ENCODE measurements at regions of chr4 and their contacts with region 1.

Region 1: GRCh38 chr4:986879-987623 is at the start of gene IDUA:
- DNase-seq: peak; percentile 83 to 91 (median 85)
- H3K4me3 ChIP-seq: peak within 1 kb of the TSS; percentile 74
- H3K4me3 Mint-ChIP-seq: peak within 1 kb of the TSS; percentile 86 to 95 (median 89)
- H3K27ac ChIP-seq: peak within 1 kb of the TSS; percentile 60
- H3K27ac Mint-ChIP-seq: peak within 1 kb of the TSS; percentile 64 to 96 (median 89)
- H3K4me1 ChIP-seq: peaks cover 23% of the 10 kb centered on the region
- H3K4me1 Mint-ChIP-seq: peaks cover 15 to 33% (median 16%) of the 10 kb centered on the region in 3 donors
- H3K27me3 ChIP-seq: no peaks in the 10 kb centered on the region
- H3K27me3 Mint-ChIP-seq: no peaks in the 10 kb centered on the region
- total RNA-seq, gene IDUA: 18.7 to 19.1 TPM

Region 2: GRCh38 chr4:742742-743311 is 244.2 kb before region 1 on chr4:
- CTCF ChIA-PET with region 1: interaction called, 60 read pairs
- POLR2A ChIA-PET with region 1: interaction called, 9 read pairs
- DNase-seq: peak; percentile 63 to 83 (median 66)
- H3K4me3 ChIP-seq: no peak overlapping the region
- H3K4me3 Mint-ChIP-seq: no peak overlapping the region
- H3K27ac ChIP-seq: no peak overlapping the region
- H3K27ac Mint-ChIP-seq: peak overlapping the region in 2 of 8 donors; percentile 9 to 17
- H3K4me1 ChIP-seq: no peaks in the 10 kb centered on the region
- H3K4me1 Mint-ChIP-seq: peaks cover 0 to 4% (median under 1%) of the 10 kb centered on the region in 3 donors
- H3K27me3 ChIP-seq: no peaks in the 10 kb centered on the region
- H3K27me3 Mint-ChIP-seq: no peaks in the 10 kb centered on the region

Region 3: DNA sequence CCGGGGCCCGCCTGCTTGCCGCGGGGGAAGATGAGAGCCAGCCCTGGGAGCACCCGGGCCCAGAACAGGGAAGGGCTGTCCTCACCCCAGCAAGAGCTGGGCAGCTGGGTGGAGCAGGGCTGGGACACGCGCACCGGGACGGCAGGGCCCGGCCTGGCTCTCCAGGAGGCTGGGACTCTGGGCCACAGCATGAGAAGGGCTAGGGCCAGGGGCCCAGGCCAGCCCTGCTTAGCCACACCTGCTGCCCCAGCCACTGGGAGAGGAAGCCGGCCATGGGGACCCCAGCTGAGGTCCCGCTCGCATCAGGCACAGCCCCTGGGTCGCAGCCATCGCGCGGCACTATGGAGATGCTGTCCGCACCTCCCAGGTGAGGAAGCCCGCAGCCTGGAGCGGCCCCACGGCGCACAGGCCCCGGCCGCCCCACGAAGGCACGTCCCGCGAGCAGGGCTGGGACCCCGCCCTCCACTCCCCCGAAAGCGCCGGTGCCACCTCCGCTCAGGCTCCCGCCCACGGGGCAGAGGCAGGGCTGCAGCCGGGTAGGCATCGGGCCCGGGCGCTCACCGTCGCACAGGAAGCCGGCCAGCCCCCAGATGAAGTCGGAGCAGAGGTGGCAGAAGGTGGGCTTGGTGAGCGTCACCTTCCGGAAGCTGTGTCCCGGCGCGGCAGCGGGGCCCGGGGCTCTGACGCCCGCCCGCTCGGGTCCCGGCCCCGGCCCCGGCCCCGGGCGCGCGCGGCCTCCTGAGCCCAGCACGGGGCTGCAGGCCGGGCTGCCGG is 14.2 kb before region 1 on chr4:
- CTCF ChIA-PET with region 1: interaction called, 11 read pairs
- POLR2A ChIA-PET with region 1: interaction called, 4 read pairs
- DNase-seq: peak; percentile 55 to 82 (median 71)
- H3K4me3 ChIP-seq: peak overlapping the region; percentile 61
- H3K4me3 Mint-ChIP-seq: peak overlapping the region; percentile 38 to 82 (median 61)
- H3K27ac ChIP-seq: peak overlapping the region; percentile 57
- H3K27ac Mint-ChIP-seq: peak overlapping the region in 3 of 8 donors; percentile 22 to 63 (median 61)
- H3K4me1 ChIP-seq: peaks cover 33% of the 10 kb centered on the region
- H3K4me1 Mint-ChIP-seq: peaks cover 16 to 27% (median 17%) of the 10 kb centered on the region in 3 donors
- H3K27me3 ChIP-seq: no peaks in the 10 kb centered on the region
- H3K27me3 Mint-ChIP-seq: no peaks in the 10 kb centered on the region

Region 4: DNA sequence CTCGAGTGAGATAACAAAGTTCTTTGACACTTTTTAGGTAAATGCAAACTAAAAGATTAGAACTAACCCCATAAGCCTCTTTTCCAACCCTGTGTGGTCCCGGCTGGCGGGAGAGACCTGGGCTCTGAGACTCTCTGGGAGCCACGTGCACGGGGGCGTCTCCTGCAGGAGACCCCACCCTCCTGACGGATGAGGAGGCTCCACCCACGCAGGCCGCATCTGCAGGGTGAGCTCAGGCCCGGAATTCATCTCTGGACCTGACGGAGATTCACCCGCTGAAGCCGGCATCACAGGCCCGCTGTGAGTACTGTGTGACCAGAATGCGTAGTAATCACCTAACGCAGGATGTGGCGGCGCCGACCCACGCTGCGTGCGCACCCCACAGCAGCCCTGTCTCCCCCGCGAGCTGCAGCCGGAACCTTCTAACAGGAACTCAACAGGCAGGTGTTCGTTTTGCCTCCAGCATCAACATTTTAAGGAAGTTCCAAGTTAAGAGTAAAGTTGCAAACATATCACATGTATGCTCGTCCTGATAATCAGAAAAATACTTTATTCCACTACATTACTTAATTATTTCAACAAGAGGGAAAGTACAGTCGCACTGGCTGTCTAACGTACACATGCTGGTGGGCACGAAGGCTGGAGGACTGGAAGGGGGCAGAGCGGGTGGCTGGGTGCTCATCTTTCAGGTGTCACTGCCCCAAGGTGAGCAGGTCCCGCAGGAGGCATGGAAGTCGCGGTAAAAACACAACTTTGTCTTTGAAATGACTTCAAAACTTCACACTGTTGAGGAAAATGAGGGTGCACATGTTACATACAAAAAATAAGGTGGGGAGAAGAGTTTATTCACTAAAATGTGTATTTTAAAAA is 68.9 kb after region 1 on chr4:
- CTCF ChIA-PET with region 1: no interaction called
- POLR2A ChIA-PET with region 1: interaction called, 10 read pairs
- DNase-seq: peak; percentile 78 to 93 (median 91)
- H3K4me3 ChIP-seq: peak overlapping the region; percentile 67
- H3K4me3 Mint-ChIP-seq: peak overlapping the region; percentile 75 to 90 (median 84)
- H3K27ac ChIP-seq: peak overlapping the region; percentile 53
- H3K27ac Mint-ChIP-seq: peak overlapping the region; percentile 78 to 97 (median 94)
- H3K4me1 ChIP-seq: peaks cover 14% of the 10 kb centered on the region
- H3K4me1 Mint-ChIP-seq: peaks cover 12 to 16% (median 14%) of the 10 kb centered on the region in 3 donors
- H3K27me3 ChIP-seq: no peaks in the 10 kb centered on the region
- H3K27me3 Mint-ChIP-seq: peaks cover 16 to 18% of the 10 kb centered on the region in 2 donors

Region 5: DNA sequence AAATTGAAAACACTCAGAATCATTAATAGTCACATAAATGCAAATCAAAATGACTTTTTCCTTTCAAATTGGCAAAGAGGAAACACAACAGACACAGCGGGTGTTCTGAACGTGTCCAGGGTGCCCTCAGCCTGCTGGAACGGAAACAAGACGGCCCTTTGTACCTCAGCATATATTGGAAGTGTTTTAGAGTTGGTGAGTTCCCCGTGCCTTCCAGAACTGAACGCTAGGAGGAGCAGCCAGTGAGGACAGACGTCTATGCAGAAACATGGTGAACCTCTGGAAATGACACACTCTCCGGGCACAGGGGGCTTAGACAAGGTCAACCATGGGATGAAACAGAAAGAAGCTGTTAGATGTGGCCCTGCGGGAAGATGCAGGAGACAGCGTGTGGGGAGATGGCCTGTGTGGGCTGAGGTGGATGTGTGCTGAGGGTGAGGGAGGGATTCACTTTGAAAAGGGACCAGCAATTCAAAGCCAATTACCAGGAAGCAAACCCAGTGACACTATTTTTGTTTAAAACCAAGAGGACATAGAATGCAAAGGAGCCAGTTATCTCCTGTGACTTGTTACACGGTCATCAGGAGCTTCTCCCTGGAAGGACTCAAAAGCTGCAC is 85.9 kb after region 1 on chr4:
- CTCF ChIA-PET with region 1: no interaction called
- POLR2A ChIA-PET with region 1: no interaction called
- DNase-seq: peak in 4 of 5 donors; percentile 27 to 57 (median 42)
- H3K4me3 ChIP-seq: no peak overlapping the region
- H3K4me3 Mint-ChIP-seq: peak overlapping the region in 1 of 7 donors; percentile 2
- H3K27ac ChIP-seq: no peak overlapping the region
- H3K27ac Mint-ChIP-seq: peak overlapping the region in 4 of 8 donors; percentile 21 to 80 (median 41)
- H3K4me1 ChIP-seq: no peaks in the 10 kb centered on the region
- H3K4me1 Mint-ChIP-seq: peaks cover 5 to 12% (median 12%) of the 10 kb centered on the region in 3 donors
- H3K27me3 ChIP-seq: no peaks in the 10 kb centered on the region
- H3K27me3 Mint-ChIP-seq: peaks cover 12 to 23% of the 10 kb centered on the region in 2 donors

Region 6: GRCh38 chr4:1289207-1290164 is 302.4 kb after region 1 on chr4 and contains the start of gene MAEA:
- CTCF ChIA-PET with region 1: no interaction called
- POLR2A ChIA-PET with region 1: no interaction called
- DNase-seq: peak; percentile 94 to 98 (median 96)
- H3K4me3 ChIP-seq: peak within 1 kb of the TSS; percentile 88
- H3K4me3 Mint-ChIP-seq: peak within 1 kb of the TSS; percentile 89 to 99 (median 92)
- H3K27ac ChIP-seq: peak within 1 kb of the TSS; percentile 80
- H3K27ac Mint-ChIP-seq: peak within 1 kb of the TSS; percentile 91 to 98 (median 96)
- H3K4me1 ChIP-seq: peaks cover 39% of the 10 kb centered on the region
- H3K4me1 Mint-ChIP-seq: peaks cover 31 to 47% (median 42%) of the 10 kb centered on the region in 3 donors
- H3K27me3 ChIP-seq: no peaks in the 10 kb centered on the region
- H3K27me3 Mint-ChIP-seq: peaks cover 0 to 4% of the 10 kb centered on the region in 2 donors
- total RNA-seq, gene MAEA: 59.4 to 63.8 TPM